Common myeloid progenitor, CD34-positive (primary cell): ENCODE measurements at regions of chr21 and their contacts with region 1.

Region 1: DNA sequence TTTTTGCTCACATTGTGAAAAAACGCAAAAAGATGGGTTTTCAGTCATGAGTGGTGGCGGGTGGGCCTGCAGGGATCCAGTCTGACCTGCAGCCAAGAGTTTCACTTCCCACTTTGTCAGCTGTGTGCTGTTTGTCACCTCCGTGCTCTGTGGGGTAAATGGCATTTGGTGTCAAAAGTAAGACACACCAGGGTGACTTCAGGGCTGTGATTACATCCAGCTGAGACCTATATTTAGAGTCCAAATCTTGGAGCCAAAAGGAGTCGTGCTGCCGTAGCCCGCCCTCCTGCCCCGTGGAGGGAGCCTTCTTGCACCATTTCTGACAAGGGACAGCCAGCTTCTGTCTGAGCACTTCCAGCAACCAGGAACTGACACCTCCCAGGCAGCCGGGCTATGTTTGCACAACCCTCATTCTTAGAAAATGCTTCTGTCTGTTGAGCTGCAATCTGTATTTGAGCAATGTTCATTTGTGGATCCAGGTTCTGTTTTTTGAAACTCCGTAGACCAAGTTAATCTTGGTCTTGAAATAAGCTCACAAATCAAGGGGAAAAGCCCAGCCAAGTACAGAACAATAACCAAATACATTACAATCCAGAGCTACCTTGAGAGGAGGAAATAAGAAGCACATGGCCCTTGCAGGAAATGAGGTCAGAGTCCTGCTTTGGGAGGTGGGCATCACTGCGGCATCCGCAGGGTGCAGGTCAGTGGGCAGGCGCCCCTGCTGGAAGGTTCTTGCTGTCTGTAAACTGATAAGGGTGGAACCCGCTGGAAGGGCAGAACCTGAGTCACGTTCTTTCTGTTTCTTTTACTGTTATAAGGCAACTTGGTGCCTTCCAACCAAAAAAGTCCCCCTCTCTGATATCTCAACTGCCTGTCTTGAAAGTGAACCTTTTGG is 14.4 kb downstream of the ABCG1 start:
- DNase-seq: peak; percentile 91 to 96 (median 95)
- H3K4me3 ChIP-seq: peak overlapping the region in 2 of 7 experiments; percentile 21 to 71
- H3K27ac ChIP-seq: peak overlapping the region in 1 of 2 experiments; percentile 20
- H3K4me1 ChIP-seq: peaks cover 38 to 96% (median 92%) of the 10 kb centered on the region in 4 experiments
- H3K27me3 ChIP-seq: no peaks in the 10 kb centered on the region

Region 2: DNA sequence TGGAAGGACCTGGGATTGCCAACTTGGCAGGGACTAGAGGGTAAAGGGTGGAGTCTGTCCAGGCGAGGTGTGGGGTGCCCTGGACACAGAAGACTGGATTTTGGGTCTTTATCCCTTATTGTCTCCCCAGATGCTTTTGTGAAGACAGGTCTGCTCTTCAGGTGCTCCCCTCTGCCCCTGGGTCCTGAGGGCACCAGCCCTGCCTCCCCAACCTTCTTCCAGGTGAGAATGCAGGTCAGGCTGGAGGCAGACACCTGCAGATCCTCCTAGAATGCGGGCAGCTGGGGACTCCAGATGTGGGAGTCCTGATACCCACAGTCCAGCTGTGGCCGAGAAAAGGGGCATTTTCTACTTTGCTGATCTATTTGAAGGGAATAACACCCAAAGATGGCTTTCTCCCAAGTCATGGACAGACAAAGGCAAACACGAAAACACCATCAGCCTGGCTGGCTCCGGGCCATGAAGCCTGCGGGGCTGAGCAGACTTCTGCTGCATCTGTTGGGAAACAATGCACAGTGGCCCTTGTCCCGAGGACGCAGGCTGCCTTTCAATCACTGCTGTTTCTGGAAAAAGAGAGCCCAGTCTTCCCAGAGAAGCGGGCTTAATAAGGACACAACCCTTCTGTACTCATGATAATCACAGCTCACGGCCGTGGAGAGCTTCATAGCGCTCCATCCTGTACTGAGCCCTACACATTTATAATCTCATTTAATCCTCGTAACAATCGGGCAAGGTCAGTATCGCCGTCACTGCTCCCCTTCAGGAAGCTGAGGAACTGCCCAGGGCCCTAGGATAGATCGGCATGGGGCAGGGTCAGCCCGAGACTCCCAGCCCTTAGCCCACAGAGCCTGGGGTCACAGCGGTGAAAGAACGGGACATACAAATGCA is 76.4 kb before region 1 on chr21:
- CTCF ChIA-PET with region 1: interaction called, 13 read pairs
- POLR2A ChIA-PET with region 1: no interaction called
- DNase-seq: no peak
- H3K4me3 ChIP-seq: no peak overlapping the region
- H3K27ac ChIP-seq: no peak overlapping the region
- H3K4me1 ChIP-seq: peaks cover 0 to 40% (median 22%) of the 10 kb centered on the region in 4 experiments
- H3K27me3 ChIP-seq: no peaks in the 10 kb centered on the region

Region 3: DNA sequence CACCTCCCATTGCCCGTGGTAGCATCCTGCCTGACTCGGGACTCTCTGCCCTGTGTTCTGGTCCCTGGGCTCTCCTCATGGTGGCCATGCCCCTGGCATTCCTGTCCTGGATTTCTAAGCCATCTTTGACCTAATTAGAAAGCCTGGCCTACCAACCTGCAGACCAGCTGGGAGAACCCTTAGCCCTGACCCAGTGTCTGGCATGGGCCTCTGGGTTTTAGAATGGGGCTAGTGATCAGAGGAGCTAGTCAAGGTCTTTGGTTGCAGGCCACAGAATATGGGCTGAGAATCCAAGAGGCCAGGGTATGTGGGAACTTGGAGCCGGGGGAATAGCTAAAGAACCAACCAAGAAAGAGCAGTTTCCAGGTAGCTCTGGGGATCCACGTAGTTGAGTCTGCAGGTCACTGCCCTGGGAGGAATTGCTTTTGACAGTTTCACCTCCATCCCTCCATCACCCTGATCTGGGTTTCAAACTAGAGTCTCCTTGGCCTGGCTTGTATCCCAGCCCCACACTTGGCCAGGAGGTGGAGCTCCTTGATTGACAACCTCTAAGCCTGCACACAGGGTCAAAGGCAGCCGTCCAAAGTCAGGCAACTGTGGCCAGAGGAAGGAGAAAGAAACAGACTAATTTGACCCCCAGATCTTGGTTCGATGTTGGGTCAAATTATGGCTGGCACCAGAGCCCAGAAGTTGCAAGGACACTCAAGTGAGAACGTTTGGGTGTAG is 69.1 kb before region 1 on chr21:
- CTCF ChIA-PET with region 1: interaction called, 14 read pairs
- POLR2A ChIA-PET with region 1: interaction called, 5 read pairs
- DNase-seq: peak; percentile 49 to 64 (median 54)
- H3K4me3 ChIP-seq: no peak overlapping the region
- H3K27ac ChIP-seq: no peak overlapping the region
- H3K4me1 ChIP-seq: peaks cover 0 to 30% (median 26%) of the 10 kb centered on the region in 4 experiments
- H3K27me3 ChIP-seq: no peaks in the 10 kb centered on the region

Region 4: GRCh38 chr21:42220138-42220701 is 13.1 kb before region 1 on chr21:
- CTCF ChIA-PET with region 1: interaction called, 39 read pairs
- POLR2A ChIA-PET with region 1: interaction called, 23 read pairs
- DNase-seq: peak; percentile 93 to 98 (median 98)
- H3K4me3 ChIP-seq: peak overlapping the region; percentile 57 to 91 (median 80)
- H3K27ac ChIP-seq: peak overlapping the region; percentile 54 to 66
- H3K4me1 ChIP-seq: peaks cover 8 to 37% (median 28%) of the 10 kb centered on the region in 4 experiments
- H3K27me3 ChIP-seq: no peaks in the 10 kb centered on the region

Region 5: GRCh38 chr21:42248783-42249597 is 15.7 kb after region 1 on chr21:
- CTCF ChIA-PET with region 1: interaction called, 25 read pairs
- POLR2A ChIA-PET with region 1: interaction called, 3 read pairs
- DNase-seq: peak in 2 of 3 donors; percentile 43 to 50
- H3K4me3 ChIP-seq: no peak overlapping the region
- H3K27ac ChIP-seq: no peak overlapping the region
- H3K4me1 ChIP-seq: peaks cover 0 to 55% (median 40%) of the 10 kb centered on the region in 4 experiments
- H3K27me3 ChIP-seq: no peaks in the 10 kb centered on the region

Region 6: DNA sequence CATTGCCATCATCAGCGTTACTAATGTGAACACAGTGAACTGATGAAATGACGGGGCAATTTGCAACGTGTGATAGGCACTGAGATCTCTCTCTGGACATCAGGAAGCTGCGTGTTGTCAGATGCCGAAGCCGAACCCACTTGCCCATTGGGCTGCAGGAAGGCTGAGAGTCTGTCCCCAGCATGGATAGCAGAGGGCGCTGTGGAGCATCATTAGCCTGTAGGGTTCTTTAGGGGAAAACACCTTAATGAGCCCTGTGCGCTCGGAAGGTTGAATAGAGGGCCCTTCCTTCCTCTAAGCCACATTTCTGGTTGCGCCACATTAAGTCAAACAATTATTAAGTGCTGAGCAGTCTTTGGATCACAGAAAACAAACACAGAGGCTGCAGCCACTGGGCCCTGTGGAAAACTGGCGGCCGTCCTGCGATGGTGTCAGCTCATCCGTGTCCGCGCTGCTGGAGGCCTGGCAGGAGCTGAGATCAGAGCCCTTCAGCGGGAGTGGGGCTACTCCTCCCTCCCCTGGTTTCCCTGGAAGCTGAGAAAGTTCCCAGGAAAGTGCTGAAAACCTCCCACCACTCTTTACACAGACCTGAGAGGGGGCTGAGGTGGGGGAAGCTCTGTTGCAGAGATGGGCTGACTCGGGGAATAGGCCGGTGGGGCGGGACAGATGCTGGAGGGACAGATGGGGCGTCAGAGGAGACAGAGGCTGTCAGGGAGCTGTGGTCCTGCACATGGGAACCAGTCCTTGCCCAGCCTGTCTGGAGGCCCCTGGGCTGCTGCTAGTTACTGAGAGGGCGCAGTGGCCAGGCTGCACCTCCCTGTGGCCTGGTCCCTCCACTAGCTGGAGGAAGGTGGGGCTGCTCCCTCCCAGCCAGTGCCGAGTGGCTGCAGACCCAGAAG is 104.8 kb after region 1 on chr21:
- CTCF ChIA-PET with region 1: no interaction called
- POLR2A ChIA-PET with region 1: no interaction called
- DNase-seq: peak; percentile 81 to 94 (median 91)
- H3K4me3 ChIP-seq: peak overlapping the region in 1 of 7 experiments; percentile 28
- H3K27ac ChIP-seq: no peak overlapping the region
- H3K4me1 ChIP-seq: peaks cover 0 to 9% (median 6%) of the 10 kb centered on the region in 4 experiments
- H3K27me3 ChIP-seq: peaks cover 0 to 3% (median 0%) of the 10 kb centered on the region in 5 experiments